H1 (cell line): ENCODE measurements at regions of chr10 and their contacts with region 1.

Region 1: DNA sequence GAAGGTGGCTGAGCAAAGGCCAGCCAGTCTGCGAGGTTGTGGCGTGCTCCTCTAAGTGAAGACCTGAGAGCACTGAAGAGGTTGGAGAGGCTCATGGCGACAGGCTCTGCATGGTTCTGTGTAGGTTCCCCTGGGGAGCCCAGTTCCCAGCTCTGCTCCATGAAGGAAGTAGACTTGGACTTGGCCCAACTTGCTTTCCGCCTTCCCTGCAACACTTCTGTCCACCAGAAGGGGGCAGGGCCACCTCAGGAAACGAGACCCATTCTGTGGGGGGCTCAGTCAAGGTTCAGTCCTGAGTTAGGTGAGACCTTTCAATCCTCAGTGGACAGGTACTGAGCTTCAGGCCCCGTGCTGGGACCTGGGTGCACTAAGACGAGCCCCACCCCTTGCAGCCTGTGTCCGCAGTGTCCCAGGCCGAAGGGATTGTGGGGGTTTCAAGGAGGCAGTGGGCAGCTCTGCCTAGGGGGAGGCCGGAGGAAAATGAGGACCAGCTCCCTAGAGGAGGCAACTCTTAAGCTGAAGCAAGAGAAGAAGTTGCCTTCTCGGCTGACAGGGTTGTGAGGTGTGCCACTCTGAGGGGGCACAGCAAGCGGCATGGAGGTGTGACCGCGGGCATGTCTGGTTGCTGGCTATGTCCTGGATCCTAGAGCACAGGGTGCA is 15.0 kb upstream of the PCBD1 start:
- DNase-seq: peak in 1 of 2 experiments; percentile 93
- H3K4me3 ChIP-seq: no peak overlapping the region
- H3K27ac ChIP-seq: no peak overlapping the region
- H3K4me1 ChIP-seq: no peaks in the 10 kb centered on the region; a peak in 1 of 7 replicates
- H3K27me3 ChIP-seq: no peaks in the 10 kb centered on the region
- CTCF ChIP-seq: peak; percentile 92 to 99 (median 97)
- EP300 ChIP-seq: no peak
- POLR2A ChIP-seq: no peak
- RAD21 ChIP-seq: peak; percentile 96 to 99

Region 2: GRCh38 chr10:70803775-70804420 is 99.5 kb before region 1 on chr10:
- CTCF ChIA-PET with region 1: no interaction called
- POLR2A ChIA-PET with region 1: no interaction called
- DNase-seq: no peak
- H3K4me3 ChIP-seq: no peak overlapping the region
- H3K27ac ChIP-seq: no peak overlapping the region
- H3K4me1 ChIP-seq: peaks cover 0 to 5% (median under 1%) of the 10 kb centered on the region in 4 experiments; a peak in 3 of 7 replicates
- H3K27me3 ChIP-seq: no peaks in the 10 kb centered on the region
- CTCF ChIP-seq: no peak
- EP300 ChIP-seq: no peak
- POLR2A ChIP-seq: no peak
- RAD21 ChIP-seq: no peak

Region 3: GRCh38 chr10:70849582-70850016 is 53.8 kb before region 1 on chr10:
- CTCF ChIA-PET with region 1: no interaction called
- POLR2A ChIA-PET with region 1: no interaction called
- DNase-seq: no peak
- H3K4me3 ChIP-seq: no peak overlapping the region
- H3K27ac ChIP-seq: no peak overlapping the region
- H3K4me1 ChIP-seq: no peaks in the 10 kb centered on the region
- H3K27me3 ChIP-seq: no peaks in the 10 kb centered on the region
- CTCF ChIP-seq: no peak
- EP300 ChIP-seq: no peak
- POLR2A ChIP-seq: no peak
- RAD21 ChIP-seq: no peak

Region 4: DNA sequence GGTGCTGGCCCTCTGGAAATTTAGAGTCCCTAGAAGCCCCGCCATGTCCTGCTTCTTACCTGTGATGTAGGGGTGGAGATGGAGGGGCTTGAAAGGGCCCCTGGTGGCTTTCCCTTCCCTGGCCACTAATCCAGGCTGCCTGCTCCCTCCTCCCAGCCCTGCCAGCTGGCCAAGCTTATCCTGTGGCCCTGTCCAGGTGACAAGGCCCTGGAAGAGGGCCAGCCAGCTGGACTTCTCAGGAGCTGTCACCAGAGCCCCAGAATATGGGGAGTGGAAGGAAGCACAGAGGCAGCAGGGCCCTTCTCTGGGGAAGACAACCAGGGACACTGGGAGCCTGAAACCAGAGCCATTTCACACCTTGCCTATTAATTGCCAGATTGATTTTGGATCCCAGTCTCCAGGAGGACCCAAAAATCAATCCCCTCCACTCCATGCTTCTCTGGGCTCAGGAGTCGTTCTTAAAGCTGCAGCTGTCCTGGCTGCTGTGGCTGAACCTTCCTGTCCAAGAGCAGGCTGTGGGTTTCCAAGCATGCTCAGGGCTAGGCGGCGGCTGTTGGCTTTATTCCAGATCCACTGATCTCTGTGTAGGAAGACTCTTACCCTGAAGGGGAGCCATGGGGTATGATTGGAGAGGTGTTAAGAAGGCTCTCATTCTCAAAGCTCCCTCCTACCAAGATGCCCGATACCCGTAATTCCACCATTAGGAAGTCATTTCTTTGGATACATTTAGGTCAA is 37.6 kb after region 1 on chr10:
- CTCF ChIA-PET with region 1: interaction called, 13 read pairs
- POLR2A ChIA-PET with region 1: no interaction called
- DNase-seq: no peak
- H3K4me3 ChIP-seq: no peak overlapping the region
- H3K27ac ChIP-seq: no peak overlapping the region
- H3K4me1 ChIP-seq: no peaks in the 10 kb centered on the region
- H3K27me3 ChIP-seq: no peaks in the 10 kb centered on the region; a peak in 1 of 7 replicates
- CTCF ChIP-seq: no peak
- EP300 ChIP-seq: no peak
- POLR2A ChIP-seq: no peak
- RAD21 ChIP-seq: no peak

Region 5: GRCh38 chr10:71005337-71006305 is 102.2 kb after region 1 on chr10:
- CTCF ChIA-PET with region 1: interaction called, 10 read pairs
- POLR2A ChIA-PET with region 1: no interaction called
- DNase-seq: no peak
- H3K4me3 ChIP-seq: no peak overlapping the region
- H3K27ac ChIP-seq: no peak overlapping the region
- H3K4me1 ChIP-seq: peaks cover 0 to 11% (median 5%) of the 10 kb centered on the region in 4 experiments; a peak in 6 of 7 replicates
- H3K27me3 ChIP-seq: no peaks in the 10 kb centered on the region; a peak in 2 of 7 replicates
- CTCF ChIP-seq: no peak
- EP300 ChIP-seq: no peak
- POLR2A ChIP-seq: no peak
- RAD21 ChIP-seq: no peak

Region 6: GRCh38 chr10:71075086-71075758 is 171.8 kb after region 1 on chr10:
- CTCF ChIA-PET with region 1: interaction called, 25 read pairs
- POLR2A ChIA-PET with region 1: no interaction called
- DNase-seq: no peak
- H3K4me3 ChIP-seq: no peak overlapping the region
- H3K27ac ChIP-seq: no peak overlapping the region
- H3K4me1 ChIP-seq: peaks cover 3 to 27% (median 11%) of the 10 kb centered on the region in 4 experiments; a peak in 6 of 7 replicates
- H3K27me3 ChIP-seq: no peaks in the 10 kb centered on the region; a peak in 2 of 7 replicates
- CTCF ChIP-seq: no peak
- EP300 ChIP-seq: no peak
- POLR2A ChIP-seq: no peak
- RAD21 ChIP-seq: no peak

Region 7: GRCh38 chr10:71278691-71279588 is 375.5 kb after region 1 on chr10:
- CTCF ChIA-PET with region 1: interaction called, 48 read pairs
- POLR2A ChIA-PET with region 1: no interaction called
- DNase-seq: no peak
- H3K4me3 ChIP-seq: no peak overlapping the region
- H3K27ac ChIP-seq: no peak overlapping the region; the same call in 1 of the 2 replicates
- H3K4me1 ChIP-seq: peaks cover 0 to 25% (median 16%) of the 10 kb centered on the region in 4 experiments; a peak in 6 of 7 replicates
- H3K27me3 ChIP-seq: no peaks in the 10 kb centered on the region
- CTCF ChIP-seq: no peak
- EP300 ChIP-seq: no peak
- POLR2A ChIP-seq: no peak
- RAD21 ChIP-seq: no peak